AG04449 (cell line): ENCODE measurements at regions of chr20 and their contacts with region 1.

Region 1: DNA sequence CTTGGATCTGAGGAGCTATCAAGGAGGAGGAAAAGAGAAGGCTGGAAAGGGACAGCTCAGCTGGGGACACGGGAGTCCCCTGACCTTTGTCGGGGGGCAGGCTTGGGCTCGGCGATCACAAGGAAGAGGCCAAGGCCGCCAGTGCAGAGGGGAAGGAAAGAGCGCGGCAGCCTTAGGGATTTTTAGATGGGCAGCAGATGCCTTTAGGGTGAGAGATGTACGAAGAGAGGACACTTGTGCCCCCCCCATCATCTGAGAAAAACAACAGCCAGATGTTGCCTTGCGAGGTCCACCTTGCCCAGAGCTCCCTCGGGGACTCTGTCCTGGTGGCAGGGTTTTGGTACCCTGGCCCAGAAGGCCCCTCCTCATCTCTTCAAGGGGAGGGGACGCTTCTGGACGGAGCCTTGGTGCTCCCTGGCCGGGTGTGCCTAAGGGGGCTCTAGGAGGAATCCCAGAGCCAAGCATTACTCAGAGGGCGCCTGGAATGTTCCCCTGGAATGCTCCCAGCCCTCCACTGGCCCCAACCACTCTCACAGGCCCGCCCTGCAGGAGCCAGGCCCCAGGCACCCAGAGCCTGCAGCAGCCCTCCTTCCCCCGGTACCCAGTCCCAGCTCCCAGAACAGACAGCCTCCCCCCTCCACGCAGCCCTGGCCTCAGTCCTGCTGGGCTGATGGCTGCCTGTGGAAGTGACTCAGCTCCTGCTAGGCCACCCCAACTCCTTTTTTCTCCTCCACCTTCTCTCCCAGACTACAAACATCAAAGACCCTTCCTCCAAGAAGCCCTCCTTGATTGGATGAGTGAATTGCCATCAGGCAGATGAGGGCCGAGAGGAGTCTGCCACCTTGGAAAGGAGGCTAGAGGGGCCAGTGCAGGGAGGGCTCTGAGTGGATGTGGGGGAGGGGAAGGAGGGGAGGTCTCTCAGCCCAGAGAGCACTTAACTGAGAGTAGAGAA is 1.8 kb downstream of the ADAM33 start:
- DNase-seq: peak; percentile 57
- H3K4me3 ChIP-seq: peak overlapping the region; percentile 70
- CTCF ChIP-seq: no peak

Region 2: DNA sequence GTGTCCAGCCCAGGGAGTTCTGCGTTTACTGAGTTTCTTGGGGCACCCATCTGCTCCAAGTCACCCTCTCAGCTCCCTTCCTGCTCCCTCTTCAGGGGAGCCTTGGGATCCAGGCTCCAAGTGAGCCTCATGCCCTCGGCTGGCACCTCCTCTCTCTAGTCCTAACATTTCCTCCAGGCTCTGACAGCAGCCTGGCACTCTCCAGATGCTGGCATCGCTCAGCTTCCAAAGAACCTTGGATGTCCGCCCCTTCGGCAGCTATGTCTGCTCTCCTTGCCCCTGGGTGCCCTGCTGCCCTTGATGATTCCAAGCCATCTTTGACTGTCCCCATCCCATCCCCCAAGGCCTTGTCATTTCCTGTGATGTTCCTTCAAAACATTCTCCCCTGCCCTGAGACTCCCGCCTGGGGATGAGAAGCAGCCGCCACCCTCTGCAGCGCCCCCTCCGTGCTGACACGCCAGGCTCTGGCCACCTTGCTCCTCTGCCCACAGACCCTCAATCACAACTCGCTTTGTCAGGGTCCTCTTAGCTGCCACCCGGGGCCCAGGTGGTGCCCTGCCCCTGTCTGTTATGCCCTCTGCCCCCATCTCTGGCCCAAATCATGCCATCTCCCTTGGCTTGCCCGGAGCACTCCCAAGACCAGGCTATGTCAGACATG is 10.2 kb before region 1 on chr20:
- CTCF ChIA-PET with region 1: interaction called, 58 read pairs
- POLR2A ChIA-PET with region 1: interaction called, 5 read pairs
- DNase-seq: no peak
- H3K4me3 ChIP-seq: no peak overlapping the region
- CTCF ChIP-seq: no peak

Region 3: DNA sequence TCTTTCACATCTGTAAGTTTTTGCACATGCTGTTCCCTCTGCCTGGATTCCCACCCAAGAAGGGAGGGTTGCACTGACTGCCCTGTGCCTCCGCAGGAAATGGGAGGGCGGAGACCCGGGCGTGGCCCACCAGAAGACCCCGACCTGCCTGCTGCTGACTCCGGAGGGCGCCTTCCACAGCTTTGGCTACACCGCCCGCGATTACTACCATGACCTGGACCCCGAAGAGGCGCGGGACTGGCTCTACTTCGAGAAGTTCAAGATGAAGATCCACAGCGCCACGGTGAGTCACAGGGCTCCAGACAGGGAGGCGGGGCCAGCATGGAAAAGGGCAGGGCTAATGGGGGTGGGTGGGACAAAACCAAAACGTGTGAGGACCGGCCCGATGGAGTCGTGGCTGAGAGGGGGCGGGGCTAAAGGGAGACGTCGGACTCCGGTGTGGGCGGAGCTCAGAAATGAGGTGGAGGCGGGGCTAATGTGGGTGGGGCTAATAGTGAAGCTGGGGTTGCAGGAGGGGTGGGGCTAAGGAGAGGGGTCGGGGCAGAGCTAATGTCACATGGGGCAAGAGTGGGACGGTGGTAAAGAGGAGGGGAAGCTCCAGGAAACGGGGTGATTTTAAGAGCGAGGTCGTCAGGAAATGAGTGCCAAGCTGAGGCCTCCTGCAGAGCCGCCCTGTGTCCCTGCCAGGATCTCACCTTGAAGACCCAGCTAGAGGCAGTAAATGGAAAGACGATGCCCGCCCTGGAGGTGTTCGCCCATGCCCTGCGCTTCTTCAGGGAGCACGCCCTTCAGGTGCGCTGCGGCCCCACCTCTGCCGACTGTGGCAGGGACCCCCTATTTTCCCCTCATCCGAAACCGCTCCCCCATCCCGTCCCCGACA is 65.0 kb after region 1 on chr20:
- CTCF ChIA-PET with region 1: interaction called, 74 read pairs
- POLR2A ChIA-PET with region 1: interaction called, 3 read pairs
- DNase-seq: no peak
- H3K4me3 ChIP-seq: no peak overlapping the region
- CTCF ChIP-seq: no peak

Region 4: DNA sequence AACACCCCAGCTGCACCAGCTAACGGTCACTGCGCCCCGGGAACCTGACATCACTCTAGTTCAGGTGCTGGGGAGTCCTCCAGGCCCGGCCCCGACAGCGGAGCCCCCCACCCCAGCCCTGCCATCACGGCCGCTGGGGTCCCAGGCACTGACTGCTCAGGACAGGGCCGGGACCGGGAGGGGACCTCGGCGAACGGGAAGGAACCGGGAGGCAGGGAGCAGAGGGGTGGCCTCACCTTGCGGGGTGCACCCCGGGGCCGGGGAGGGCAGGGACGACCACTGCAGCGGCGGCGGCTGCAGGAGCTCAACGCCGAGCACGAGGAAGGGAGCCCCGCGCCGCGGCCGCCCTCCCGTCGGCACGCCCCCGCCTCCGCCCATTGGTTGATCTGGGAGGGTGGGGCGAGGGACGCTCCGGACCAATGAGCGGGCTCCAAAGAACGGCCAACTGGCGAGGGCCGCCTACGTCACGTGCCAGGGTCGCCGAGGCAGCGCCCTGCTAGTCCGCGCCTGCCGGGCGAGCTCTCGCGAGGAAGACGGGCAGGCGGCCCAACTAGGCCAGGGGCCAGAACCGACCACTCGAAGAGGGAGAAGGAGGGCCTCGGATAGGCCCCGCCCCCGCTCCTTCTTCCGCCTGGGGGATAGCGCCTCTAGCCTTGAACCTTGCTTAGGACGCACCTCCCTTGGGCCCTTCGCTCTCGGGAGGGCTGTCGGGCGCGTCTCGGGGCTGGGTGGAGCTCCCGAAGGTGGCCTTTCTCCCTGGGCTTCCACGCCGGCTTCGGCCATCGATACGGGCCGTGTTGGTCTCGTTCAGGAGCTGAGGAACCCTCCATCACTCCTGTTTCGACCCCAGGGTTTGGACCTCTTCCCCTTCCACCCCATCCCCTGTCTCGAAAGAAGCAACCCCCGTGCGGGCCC is 87.7 kb after region 1 on chr20 and contains the start of gene ADISSP:
- CTCF ChIA-PET with region 1: interaction called, 46 read pairs
- POLR2A ChIA-PET with region 1: interaction called, 4 read pairs
- DNase-seq: peak; percentile 83
- H3K4me3 ChIP-seq: peak within 1 kb of the TSS; percentile 87
- CTCF ChIP-seq: peak; percentile 17

Region 5: DNA sequence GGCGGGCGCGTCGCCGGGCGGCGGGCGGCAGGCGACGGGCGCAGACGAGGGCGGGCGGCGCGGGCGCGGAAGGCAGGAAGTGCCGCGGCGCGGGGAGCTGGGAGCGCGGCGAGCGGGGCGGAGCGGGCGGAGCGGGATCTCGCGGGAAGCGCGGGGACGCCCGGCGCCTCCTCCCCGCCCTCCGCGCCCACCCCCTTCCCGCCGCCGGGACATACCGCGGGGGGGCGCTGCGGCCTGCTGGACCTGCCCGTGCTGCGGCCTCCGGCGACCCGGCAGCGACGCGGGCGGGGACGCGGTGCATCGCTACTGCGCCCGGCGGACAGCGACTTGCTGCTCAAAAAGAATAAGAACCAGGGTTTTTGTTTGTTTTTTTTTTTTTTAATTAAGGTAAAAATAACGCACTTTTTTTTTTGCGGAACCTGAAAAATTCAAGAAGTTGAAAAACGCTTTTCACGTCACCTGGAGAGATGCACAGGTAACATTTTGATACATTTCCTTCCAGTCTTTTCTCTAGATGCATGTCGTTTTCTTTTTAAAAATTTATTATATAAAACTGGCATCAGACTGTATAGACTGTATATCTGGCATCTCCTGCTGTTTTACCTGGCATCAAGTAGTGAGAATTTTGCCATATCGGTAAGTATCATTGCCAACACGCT is 106.8 kb after region 1 on chr20 and contains the start of gene CENPB:
- CTCF ChIA-PET with region 1: interaction called, 68 read pairs
- POLR2A ChIA-PET with region 1: interaction called, 5 read pairs
- DNase-seq: no peak
- H3K4me3 ChIP-seq: peak within 1 kb of the TSS; percentile 80
- CTCF ChIP-seq: peak; percentile 70